Endothelial cell of umbilical vein (primary cell): ENCODE measurements at regions of chr17 and their contacts with region 1.

Region 1: DNA sequence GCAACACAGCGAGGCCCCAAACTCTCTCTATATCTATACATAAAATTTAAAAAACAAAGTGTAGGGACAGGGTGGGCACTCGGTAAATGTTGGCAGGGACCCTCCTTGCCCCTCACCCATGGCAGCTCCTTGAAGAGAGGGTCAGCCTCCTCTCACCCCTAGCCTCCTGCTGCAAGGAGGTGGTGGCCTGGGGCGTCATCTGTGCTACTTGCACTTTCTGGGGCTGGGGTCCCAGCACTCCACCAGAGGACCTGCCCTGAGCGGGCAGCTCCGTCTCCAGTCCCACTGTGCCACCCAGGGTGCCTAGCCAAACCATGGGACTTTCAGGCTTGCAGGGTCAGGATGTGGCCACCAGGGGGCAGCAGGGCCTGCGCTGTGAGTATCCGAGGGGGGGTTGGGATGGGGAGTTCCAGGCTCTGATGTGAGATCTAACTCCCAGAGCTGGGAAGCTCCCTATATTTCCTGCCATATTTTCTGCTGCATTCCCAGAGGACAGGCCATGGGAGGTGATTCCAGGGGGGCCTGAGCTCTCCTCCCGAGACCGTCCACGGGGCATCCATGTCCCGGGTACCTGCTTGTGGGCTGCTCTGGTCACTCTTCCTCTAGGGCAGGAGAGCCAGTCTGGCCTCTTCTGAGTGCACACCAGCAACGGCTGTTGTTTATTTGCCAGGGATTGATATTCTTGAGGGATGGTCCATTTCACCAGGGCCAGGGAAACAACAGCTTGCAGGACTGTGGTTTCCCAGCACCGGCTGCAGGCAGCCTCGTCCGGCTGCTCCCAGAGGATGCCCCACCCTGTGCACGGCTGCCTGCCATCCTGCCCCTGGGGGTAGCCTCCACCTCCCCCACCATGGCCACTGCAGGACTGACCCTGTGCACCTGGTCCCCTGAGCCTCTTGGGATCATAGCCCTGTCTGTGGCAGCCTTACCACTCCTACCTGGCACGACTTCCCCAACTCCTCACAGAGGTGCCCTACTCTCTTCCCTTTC is 1.1 kb downstream of the GPR142 start:
- DNase-seq: peak; percentile 44
- H3K4me3 ChIP-seq: no peak overlapping the region
- H3K27ac ChIP-seq: no peak overlapping the region
- H3K4me1 ChIP-seq: no peaks in the 10 kb centered on the region
- H3K27me3 ChIP-seq: no peaks in the 10 kb centered on the region
- CTCF ChIP-seq: peak; percentile 74 to 96
- POLR2A ChIP-seq: no peak

Region 2: GRCh38 chr17:74212913-74213791 is 155.2 kb before region 1 on chr17 and contains the start of gene TTYH2:
- CTCF ChIA-PET with region 1: interaction called, 6 read pairs
- POLR2A ChIA-PET with region 1: no interaction called
- dilution Hi-C with region 1: no loop called
- intact Hi-C with region 1: loop called (anchors 5 kb)
- DNase-seq: peak; percentile 73
- H3K4me3 ChIP-seq: peak within 1 kb of the TSS; percentile 41 to 76 (median 50)
- H3K27ac ChIP-seq: no peak within 1 kb of the TSS
- H3K4me1 ChIP-seq: peaks cover 17% of the 10 kb centered on the region
- H3K27me3 ChIP-seq: no peaks in the 10 kb centered on the region
- CTCF ChIP-seq: peak in 1 of 2 donors; percentile 32
- POLR2A ChIP-seq: no peak
- total RNA-seq, gene TTYH2: 0.75 and 1.1 TPM in 2 replicates

Region 3: DNA sequence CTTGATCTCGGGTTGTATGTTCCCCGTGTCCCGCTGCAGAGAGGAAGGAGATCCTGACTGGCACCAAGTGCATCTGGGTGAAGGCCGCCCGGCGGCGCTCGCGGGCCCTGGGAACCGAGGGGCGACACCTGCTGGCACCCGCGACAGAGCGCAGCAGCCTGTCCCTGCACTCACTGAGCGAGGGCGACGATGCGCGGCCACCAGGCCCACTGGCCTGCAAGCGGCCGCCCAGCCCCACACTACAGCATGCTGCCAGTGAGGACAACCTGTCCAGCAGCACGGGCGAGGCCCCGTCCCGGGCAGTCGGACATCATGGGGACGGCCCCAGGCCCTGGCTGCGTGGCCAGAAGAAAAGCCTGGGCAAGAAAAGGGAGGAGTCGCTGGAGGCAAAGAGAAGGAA is 14.3 kb before region 1 on chr17:
- CTCF ChIA-PET with region 1: interaction called, 15 read pairs
- POLR2A ChIA-PET with region 1: no interaction called
- dilution Hi-C with region 1: no loop called
- intact Hi-C with region 1: no loop called
- DNase-seq: no peak
- H3K4me3 ChIP-seq: no peak overlapping the region
- H3K27ac ChIP-seq: no peak overlapping the region
- H3K4me1 ChIP-seq: no peaks in the 10 kb centered on the region
- H3K27me3 ChIP-seq: peaks cover 10 to 30% of the 10 kb centered on the region in 2 experiments
- CTCF ChIP-seq: peak; percentile 62 to 64
- POLR2A ChIP-seq: no peak

Region 4: GRCh38 chr17:74457146-74457819 is 88.9 kb after region 1 on chr17:
- CTCF ChIA-PET with region 1: interaction called, 42 read pairs
- POLR2A ChIA-PET with region 1: no interaction called
- dilution Hi-C with region 1: no loop called
- intact Hi-C with region 1: loop called (anchors 1 kb)
- DNase-seq: peak; percentile 44
- H3K4me3 ChIP-seq: no peak overlapping the region
- H3K27ac ChIP-seq: no peak overlapping the region
- H3K4me1 ChIP-seq: peaks cover 3% of the 10 kb centered on the region
- H3K27me3 ChIP-seq: no peaks in the 10 kb centered on the region
- CTCF ChIP-seq: peak; percentile 88 to 89
- POLR2A ChIP-seq: no peak

Region 5: DNA sequence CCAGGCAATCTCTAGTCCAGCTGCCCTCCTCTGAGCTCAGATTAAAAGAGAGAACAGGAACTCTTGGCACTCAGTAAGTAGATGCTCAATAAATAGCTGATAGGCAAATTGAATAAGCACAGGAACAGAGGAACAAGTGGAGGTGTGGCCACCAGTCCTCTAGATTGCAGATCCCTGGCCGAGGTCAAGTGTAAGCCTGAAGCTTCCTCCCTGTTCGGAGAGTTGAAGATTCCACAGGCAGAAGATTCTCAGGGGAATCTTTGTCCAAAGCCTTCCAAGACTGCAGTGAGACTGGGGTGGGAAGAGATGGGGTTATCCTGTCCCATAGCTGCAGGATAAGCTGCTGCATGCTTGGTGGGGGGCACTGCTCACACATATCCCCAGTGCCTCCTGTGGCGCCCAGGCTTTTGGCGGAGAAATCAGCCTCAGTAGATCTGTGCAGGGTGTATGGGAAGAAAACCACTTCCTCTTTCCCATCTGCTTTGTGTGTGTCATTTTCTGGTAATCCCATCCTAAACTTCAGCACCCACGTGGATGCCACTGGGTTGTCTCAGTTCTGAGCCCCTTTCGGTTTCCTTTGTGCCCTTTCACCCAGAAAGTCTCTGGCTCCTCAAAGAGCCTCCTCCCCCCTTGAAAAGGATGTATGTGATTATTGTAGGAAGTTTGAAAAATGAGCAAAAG is 110.2 kb after region 1 on chr17:
- CTCF ChIA-PET with region 1: no interaction called
- POLR2A ChIA-PET with region 1: no interaction called
- dilution Hi-C with region 1: no loop called
- intact Hi-C with region 1: no loop called
- DNase-seq: no peak
- H3K4me3 ChIP-seq: no peak overlapping the region
- H3K27ac ChIP-seq: no peak overlapping the region
- H3K4me1 ChIP-seq: no peaks in the 10 kb centered on the region
- H3K27me3 ChIP-seq: no peaks in the 10 kb centered on the region
- CTCF ChIP-seq: no peak
- POLR2A ChIP-seq: no peak

Region 6: GRCh38 chr17:74601944-74602572 is 233.7 kb after region 1 on chr17:
- CTCF ChIA-PET with region 1: interaction called, 3 read pairs
- POLR2A ChIA-PET with region 1: no interaction called
- dilution Hi-C with region 1: no loop called
- intact Hi-C with region 1: loop called (anchors 1 kb)
- DNase-seq: peak; percentile 5
- H3K4me3 ChIP-seq: no peak overlapping the region
- H3K27ac ChIP-seq: no peak overlapping the region
- H3K4me1 ChIP-seq: no peaks in the 10 kb centered on the region
- H3K27me3 ChIP-seq: no peaks in the 10 kb centered on the region
- CTCF ChIP-seq: peak; percentile 37 to 42
- POLR2A ChIP-seq: no peak

Region 7: DNA sequence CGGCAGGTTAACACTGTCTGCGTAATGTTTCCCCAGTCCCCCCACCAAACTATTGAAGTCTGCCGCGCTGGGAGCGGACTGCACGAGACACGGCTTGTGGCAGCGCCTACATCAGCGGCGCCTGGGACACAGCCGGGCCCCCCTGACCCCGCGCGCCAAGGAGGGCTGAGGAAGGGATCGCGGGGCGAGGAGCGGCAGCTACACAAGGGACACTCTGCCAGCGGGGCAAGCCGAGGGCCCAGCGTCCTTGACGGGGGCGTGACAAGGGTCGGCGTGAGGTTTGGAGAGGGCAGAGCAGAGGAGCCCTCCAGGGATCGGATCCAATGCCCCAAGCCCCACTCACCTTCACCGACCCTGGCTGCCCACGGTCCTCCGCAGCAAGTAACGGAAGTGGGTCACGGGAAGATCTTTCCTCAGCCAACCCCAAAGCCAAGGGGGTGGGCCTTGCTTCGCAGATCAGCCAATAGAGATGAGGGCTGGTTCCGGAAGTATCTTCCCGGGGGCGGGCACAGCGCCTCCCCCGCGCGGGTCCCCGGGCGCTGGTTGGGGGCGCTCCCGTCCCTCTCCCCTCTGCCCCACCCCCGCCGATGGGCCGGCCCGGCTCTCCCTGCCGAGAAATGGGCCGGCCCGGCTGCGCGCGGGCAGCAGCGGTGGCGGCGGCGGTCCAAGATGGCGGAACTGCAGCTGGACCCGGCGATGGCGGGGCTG is 678.3 kb after region 1 on chr17 and contains the starts of genes ATP5PD and KCTD2:
- CTCF ChIA-PET with region 1: no interaction called
- POLR2A ChIA-PET with region 1: no interaction called
- dilution Hi-C with region 1: no loop called
- intact Hi-C with region 1: no loop called
- DNase-seq: peak; percentile 98
- H3K4me3 ChIP-seq: peak within 1 kb of the TSS; percentile 58 to 93 (median 67)
- H3K27ac ChIP-seq: peak within 1 kb of the TSS; percentile 19
- H3K4me1 ChIP-seq: peaks cover 13% of the 10 kb centered on the region
- H3K27me3 ChIP-seq: no peaks in the 10 kb centered on the region
- CTCF ChIP-seq: no peak
- POLR2A ChIP-seq: peak; percentile 93
- total RNA-seq, gene ATP5PD: 200 and 202 TPM in 2 replicates
- total RNA-seq, gene KCTD2: 20.6 and 23.2 TPM in 2 replicates